Gastrocnemius medialis (tissue), 4 donors: ENCODE measurements at regions of chr5 and their contacts with region 1.

Region 1: GRCh38 chr5:72366324-72366976 is 46.3 kb downstream of the PTCD2 start:
- DNase-seq: peak; percentile 54 to 59
- ATAC-seq: peak; percentile 83 to 88
- H3K4me3 ChIP-seq: no peak overlapping the region
- H3K27ac ChIP-seq: peak overlapping the region in 2 of 4 donors; percentile 3 to 22
- H3K4me1 ChIP-seq: peaks cover 9 to 10% of the 10 kb centered on the region in 2 donors
- H3K27me3 ChIP-seq: no peaks in the 10 kb centered on the region
- CTCF ChIP-seq: peak; percentile 76 to 87 (median 82)
- POLR2A ChIP-seq: no peak

Region 2: DNA sequence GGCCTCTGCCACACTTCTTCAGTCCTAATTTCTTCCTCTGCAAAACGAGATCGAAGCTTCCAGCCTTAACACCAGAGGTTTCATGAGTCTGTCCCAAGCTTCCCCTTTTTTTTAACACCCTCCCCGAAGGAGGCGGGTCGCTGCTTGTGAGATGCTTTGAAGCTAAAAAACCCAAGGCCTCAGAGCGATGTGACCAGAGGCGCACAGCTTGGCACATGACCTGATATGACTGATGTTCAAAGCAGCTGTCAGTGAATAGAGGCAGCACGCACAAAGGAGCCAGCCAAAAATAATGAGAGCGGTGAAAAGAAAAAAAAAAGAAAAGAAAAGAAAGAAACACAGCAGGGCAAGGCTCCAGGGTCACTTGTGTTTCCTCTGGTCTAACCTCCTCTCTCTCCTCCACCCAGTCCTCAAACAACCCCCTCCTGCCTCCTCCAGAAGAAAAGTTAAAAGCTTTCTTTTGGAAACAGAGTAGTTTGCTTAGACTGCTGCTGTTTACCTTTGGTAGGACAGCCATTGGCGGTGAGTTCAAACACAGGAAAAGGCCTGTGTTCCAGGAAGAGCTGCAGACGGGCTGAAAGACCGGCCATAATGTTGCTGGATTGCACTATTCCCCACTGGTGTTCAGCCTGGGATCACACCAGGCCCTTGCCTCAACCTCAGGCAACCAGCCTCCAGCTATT is 151.7 kb after region 1 on chr5:
- in situ Hi-C with region 1: loop called in 3 of 4 experiments (anchors 5 kb)
- intact Hi-C with region 1: no loop called
- DNase-seq: peak; percentile 37 to 69
- ATAC-seq: peak; percentile 67 to 81
- H3K4me3 ChIP-seq: no peak overlapping the region
- H3K27ac ChIP-seq: peak overlapping the region; percentile 49 to 77 (median 61)
- H3K4me1 ChIP-seq: peaks cover 11 to 19% of the 10 kb centered on the region in 2 donors
- H3K27me3 ChIP-seq: no peaks in the 10 kb centered on the region
- CTCF ChIP-seq: no peak
- POLR2A ChIP-seq: no peak

Region 3: GRCh38 chr5:72523960-72524582 is 157.6 kb after region 1 on chr5:
- in situ Hi-C with region 1: loop called in 3 of 4 experiments (anchors 5 kb)
- intact Hi-C with region 1: loop called (anchors 1 kb)
- DNase-seq: no peak
- ATAC-seq: peak; percentile 85 to 93
- H3K4me3 ChIP-seq: no peak overlapping the region
- H3K27ac ChIP-seq: peak overlapping the region in 3 of 4 donors; percentile 15 to 44 (median 33)
- H3K4me1 ChIP-seq: peaks cover 3 to 4% of the 10 kb centered on the region in 2 donors
- H3K27me3 ChIP-seq: no peaks in the 10 kb centered on the region
- CTCF ChIP-seq: peak; percentile 54 to 68 (median 65)
- POLR2A ChIP-seq: no peak

Region 4: DNA sequence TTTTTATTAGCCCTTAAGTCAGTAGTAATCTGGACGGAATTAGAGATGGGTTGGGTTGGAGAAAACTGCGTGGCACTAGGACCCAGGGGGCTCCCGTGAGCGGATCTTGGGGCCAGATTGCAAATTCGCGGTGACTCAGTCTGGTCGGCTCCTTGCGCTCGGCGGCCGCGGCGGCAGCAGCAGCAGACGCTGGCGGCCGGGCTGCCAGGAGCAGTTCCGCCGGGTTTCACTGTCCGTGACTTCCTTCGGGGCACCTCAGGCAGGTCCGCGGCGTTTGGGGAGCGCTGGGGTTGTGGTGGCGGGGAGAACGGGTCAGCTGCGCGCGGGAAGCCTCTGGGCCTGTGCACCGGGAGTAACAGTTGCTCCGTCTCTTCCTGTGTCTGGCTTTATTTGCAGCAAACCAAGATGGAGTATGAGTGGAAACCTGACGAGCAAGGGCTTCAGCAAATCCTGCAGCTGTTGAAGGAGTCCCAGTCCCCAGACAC is 481.6 kb after region 1 on chr5:
- in situ Hi-C with region 1: loop called in 1 of 4 experiments (anchors 25 kb)
- intact Hi-C with region 1: no loop called
- DNase-seq: peak; percentile 87 to 92
- ATAC-seq: peak; percentile 89 to 90
- H3K4me3 ChIP-seq: peak overlapping the region; percentile 81 to 92 (median 91)
- H3K27ac ChIP-seq: peak overlapping the region; percentile 90 to 97 (median 96)
- H3K4me1 ChIP-seq: peaks cover 76 to 83% of the 10 kb centered on the region in 2 donors
- H3K27me3 ChIP-seq: no peaks in the 10 kb centered on the region
- CTCF ChIP-seq: peak in 1 of 5 experiments; percentile 8
- POLR2A ChIP-seq: peak; percentile 94 to 95

Region 5: GRCh38 chr5:72883864-72884263 is 517.4 kb after region 1 on chr5:
- in situ Hi-C with region 1: no loop called
- intact Hi-C with region 1: no loop called
- DNase-seq: no peak
- ATAC-seq: no peak
- H3K4me3 ChIP-seq: no peak overlapping the region
- H3K27ac ChIP-seq: no peak overlapping the region
- H3K4me1 ChIP-seq: no peaks in the 10 kb centered on the region
- H3K27me3 ChIP-seq: no peaks in the 10 kb centered on the region
- CTCF ChIP-seq: no peak
- POLR2A ChIP-seq: no peak